ENCODE measurements at regions of chrX and their contacts with region 1.

Region 1: DNA sequence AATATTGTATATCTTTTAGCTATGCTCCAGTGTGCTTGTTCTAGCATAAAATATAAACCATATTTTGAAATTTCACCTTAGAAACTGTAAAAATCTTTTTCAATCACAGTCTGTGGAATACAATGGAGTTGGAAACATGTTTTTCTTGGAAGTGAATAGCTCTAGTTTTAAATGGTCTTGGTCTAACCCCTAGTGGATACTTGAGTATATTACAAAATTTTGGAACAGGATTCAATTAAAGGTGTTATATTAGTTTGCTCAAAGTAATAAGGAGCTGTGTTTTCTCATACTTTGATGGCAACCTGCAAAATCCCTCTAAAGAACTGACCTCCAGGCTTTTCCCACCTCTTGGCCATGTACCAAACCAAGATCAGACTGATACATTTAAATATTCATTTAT is 48.2 kb downstream of the STK26 start:
- DNase-seq: no peak
- ATAC-seq: no peak
- H3K4me3 Mint-ChIP-seq: no peak overlapping the region
- H3K27ac Mint-ChIP-seq: no peak overlapping the region
- H3K4me1 Mint-ChIP-seq: no peaks in the 10 kb centered on the region
- H3K27me3 Mint-ChIP-seq: no peaks in the 10 kb centered on the region

Region 2: GRCh38 chrX:132092439-132093065 is 21.3 kb after region 1 on chrX:
- CTCF ChIA-PET with region 1: interaction called, 12 read pairs
- DNase-seq: peak; percentile 64
- ATAC-seq: peak; percentile 69
- H3K4me3 Mint-ChIP-seq: no peak overlapping the region
- H3K27ac Mint-ChIP-seq: no peak overlapping the region
- H3K4me1 Mint-ChIP-seq: peaks cover 12% of the 10 kb centered on the region
- H3K27me3 Mint-ChIP-seq: no peaks in the 10 kb centered on the region